ENCODE measurements at regions of chr16 and their contacts with region 1.

Region 1: DNA sequence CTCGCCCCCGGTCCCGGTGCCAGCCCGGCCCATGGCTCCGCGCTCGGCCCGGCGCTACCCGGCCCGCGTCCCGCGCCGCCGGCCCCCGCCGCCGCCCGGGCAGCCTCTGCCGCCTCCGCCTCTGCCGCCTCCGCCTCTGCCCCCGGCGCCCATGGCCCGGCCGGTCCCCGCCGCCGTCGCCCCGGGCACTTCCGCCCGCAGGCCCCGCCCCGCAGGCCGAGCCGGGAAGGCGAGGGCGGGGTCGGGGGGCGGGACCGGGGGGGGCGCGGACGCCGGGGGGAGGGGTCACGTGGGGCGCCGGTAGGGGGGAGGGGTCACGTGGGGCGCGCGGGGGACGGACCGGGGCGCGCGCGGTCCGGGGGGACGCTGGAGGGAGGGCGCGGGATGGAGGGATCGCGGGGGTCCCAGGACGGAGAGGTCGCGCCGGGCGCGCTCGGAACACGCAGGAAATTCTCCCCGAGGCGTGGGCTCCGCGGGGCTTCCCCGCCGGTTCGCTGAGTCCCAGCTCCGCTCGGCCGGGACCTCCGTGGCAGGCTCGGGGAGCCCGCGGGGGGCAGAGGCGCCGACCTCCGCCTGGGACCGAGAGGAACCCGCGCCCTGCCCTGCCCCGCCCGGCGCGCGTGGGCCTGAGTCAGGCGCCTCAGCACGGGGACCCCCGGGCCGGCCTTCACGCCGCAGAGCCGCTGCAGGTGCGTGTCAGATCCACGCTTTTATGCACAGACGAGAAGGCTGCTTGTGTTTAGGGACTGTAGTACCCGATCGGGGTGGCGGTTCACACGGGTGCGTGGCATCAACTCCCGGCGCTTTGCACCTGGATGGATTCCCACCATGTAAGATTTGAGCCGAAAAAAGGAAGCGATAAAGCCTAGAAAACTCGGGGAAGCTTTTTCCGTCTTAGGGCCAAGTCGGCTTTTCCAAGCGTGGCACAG is at the start of gene PGAP6:
- DNase-seq: peak in 12 of 14 experiments; percentile 35 to 87 (median 71)
- ATAC-seq: peak; percentile 42
- H3K4me3 ChIP-seq: peak within 1 kb of the TSS; percentile 73
- H3K4me3 Mint-ChIP-seq: peak within 1 kb of the TSS; percentile 84
- H3K27ac ChIP-seq: peak within 1 kb of the TSS in 1 of 2 donors; percentile 64
- H3K27ac Mint-ChIP-seq: peak within 1 kb of the TSS; percentile 98
- H3K4me1 ChIP-seq: peaks cover 53% of the 10 kb centered on the region
- H3K4me1 Mint-ChIP-seq: peaks cover 26% of the 10 kb centered on the region
- H3K27me3 ChIP-seq: no peaks in the 10 kb centered on the region
- H3K27me3 Mint-ChIP-seq: no peaks in the 10 kb centered on the region
- CTCF ChIP-seq: no peak
- total RNA-seq, gene PGAP6: 59.7 to 63.7 TPM

Region 2: DNA sequence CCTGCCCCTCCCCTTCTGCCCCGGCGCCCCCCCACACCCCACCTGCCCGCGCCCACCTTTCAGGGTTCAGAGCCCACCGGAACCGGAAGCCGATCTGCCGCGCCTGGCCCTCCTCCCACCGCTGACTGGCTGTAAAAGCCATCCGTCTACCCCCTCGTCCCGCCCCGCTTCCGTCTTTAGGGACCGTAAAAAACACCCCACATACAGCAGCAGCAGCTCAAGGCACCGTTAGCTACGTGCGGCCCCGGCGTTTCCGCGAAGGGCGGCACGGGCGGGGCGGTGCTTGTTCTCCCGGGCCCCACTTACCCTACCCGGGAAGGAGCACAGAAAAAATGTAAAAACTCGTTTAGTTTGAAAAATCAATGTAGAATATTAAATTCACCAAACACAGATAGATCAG is 11.6 kb before region 1 on chr16 and contains the start of gene MRPL28:
- CTCF ChIA-PET with region 1: no interaction called
- POLR2A ChIA-PET with region 1: interaction called, 60 read pairs
- intact Hi-C with region 1: loop called in 1 of 2 experiments (anchors 1 kb)
- DNase-seq: peak; percentile 85 to 96 (median 92)
- ATAC-seq: peak; percentile 100
- H3K4me3 ChIP-seq: peak within 1 kb of the TSS; percentile 30
- H3K4me3 Mint-ChIP-seq: peak within 1 kb of the TSS; percentile 95
- H3K27ac ChIP-seq: peak within 1 kb of the TSS; percentile 23 to 60
- H3K27ac Mint-ChIP-seq: peak within 1 kb of the TSS; percentile 83
- H3K4me1 ChIP-seq: peaks cover 22% of the 10 kb centered on the region
- H3K4me1 Mint-ChIP-seq: peaks cover 17% of the 10 kb centered on the region
- H3K27me3 ChIP-seq: no peaks in the 10 kb centered on the region
- H3K27me3 Mint-ChIP-seq: no peaks in the 10 kb centered on the region
- CTCF ChIP-seq: no peak
- total RNA-seq, gene MRPL28: 19.6 to 19.7 TPM

Region 3: GRCh38 chr16:401468-402348 is 19.7 kb after region 1 on chr16 and contains the start of gene DECR2:
- CTCF ChIA-PET with region 1: interaction called, 3 read pairs
- POLR2A ChIA-PET with region 1: interaction called, 35 read pairs
- intact Hi-C with region 1: loop called (anchors 1 to 2 kb)
- DNase-seq: peak; percentile 94 to 100 (median 99)
- ATAC-seq: peak; percentile 84
- H3K4me3 ChIP-seq: peak within 1 kb of the TSS; percentile 92
- H3K4me3 Mint-ChIP-seq: peak within 1 kb of the TSS; percentile 98
- H3K27ac ChIP-seq: peak within 1 kb of the TSS; percentile 67 to 81
- H3K27ac Mint-ChIP-seq: peak within 1 kb of the TSS; percentile 97
- H3K4me1 ChIP-seq: peaks cover 21% of the 10 kb centered on the region
- H3K4me1 Mint-ChIP-seq: peaks cover 18% of the 10 kb centered on the region
- H3K27me3 ChIP-seq: no peaks in the 10 kb centered on the region
- H3K27me3 Mint-ChIP-seq: no peaks in the 10 kb centered on the region
- CTCF ChIP-seq: peak; percentile 68
- total RNA-seq, gene DECR2: 5.7 to 7.0 TPM

Region 4: GRCh38 chr16:425082-425718 is 43.1 kb after region 1 on chr16 and contains the start of gene RAB11FIP3:
- CTCF ChIA-PET with region 1: no interaction called
- POLR2A ChIA-PET with region 1: interaction called, 16 read pairs
- intact Hi-C with region 1: loop called in 1 of 2 experiments (anchors 1 kb)
- DNase-seq: peak; percentile 65 to 91 (median 84)
- ATAC-seq: peak; percentile 89
- H3K4me3 ChIP-seq: peak within 1 kb of the TSS; percentile 72
- H3K4me3 Mint-ChIP-seq: peak within 1 kb of the TSS; percentile 95
- H3K27ac ChIP-seq: peak within 1 kb of the TSS; percentile 70 to 84
- H3K27ac Mint-ChIP-seq: peak within 1 kb of the TSS; percentile 93
- H3K4me1 ChIP-seq: peaks cover 34% of the 10 kb centered on the region
- H3K4me1 Mint-ChIP-seq: peaks cover 38% of the 10 kb centered on the region
- H3K27me3 ChIP-seq: no peaks in the 10 kb centered on the region
- H3K27me3 Mint-ChIP-seq: no peaks in the 10 kb centered on the region
- CTCF ChIP-seq: peak; percentile 21
- total RNA-seq, gene RAB11FIP3: 28.4 to 29.0 TPM

Measured in CD4-positive, alpha-beta T cell (primary cell).